Activated T-helper 1 cell treated with anti-CD3 and anti-CD28 coated beads, Interleukin-12 subunit alpha, Interleukin-12 subunit beta, Interleukin-2, Interleukin-4 antibody, amounts not matched to agents 30 ng/mL and 10 ng/mL and 1 ng/mL, durations not matched to agents 14 hours and 24 hours and 36 hours (primary cell): ENCODE measurements at regions of chr15 and their contacts with region 1.

Region 1: DNA sequence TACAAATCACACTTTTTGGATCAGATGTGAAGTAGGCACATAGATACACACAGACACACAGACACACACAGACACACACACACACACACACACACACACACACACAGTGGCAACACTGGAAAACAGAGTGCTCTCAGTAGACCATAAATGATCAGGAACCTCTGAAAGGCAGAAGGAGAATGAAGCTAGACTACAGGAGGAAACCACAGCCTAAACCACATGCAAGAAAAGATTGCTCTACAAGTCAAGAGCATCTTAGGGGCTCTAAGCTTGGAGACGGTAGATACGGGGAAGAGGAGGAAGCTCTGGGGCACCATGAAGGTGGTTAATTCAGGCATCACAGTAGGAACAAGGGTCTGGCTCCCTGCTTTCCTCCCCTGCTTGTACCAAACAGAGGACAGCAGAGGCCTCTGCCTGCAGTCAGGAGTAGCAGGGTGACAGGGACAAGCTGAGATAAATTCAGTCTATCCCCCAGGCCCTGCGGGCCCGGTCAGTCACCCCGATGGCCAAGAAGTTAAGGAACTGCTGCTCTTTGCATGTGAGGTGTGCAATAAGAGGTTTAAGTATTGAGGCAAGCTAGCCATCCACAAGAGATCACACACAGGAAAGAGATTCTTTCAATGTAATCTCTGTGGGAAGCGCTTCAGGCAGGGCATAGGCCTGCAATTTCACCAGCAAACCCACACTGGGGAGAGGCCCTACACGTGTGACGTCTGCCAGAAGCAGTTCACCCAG is 23.5 kb upstream of the ARPIN start:
- DNase-seq: peak; percentile 12
- H3K4me3 Mint-ChIP-seq: peak overlapping the region; percentile 1
- H3K27ac Mint-ChIP-seq: no peak overlapping the region
- H3K4me1 Mint-ChIP-seq: peaks cover 25% of the 10 kb centered on the region
- H3K27me3 Mint-ChIP-seq: peaks cover 36% of the 10 kb centered on the region

Region 2: GRCh38 chr15:89971592-89971997 is 35.4 kb after region 1 on chr15:
- intact Hi-C with region 1: loop called (anchors 5 kb)
- DNase-seq: peak; percentile 16
- H3K4me3 Mint-ChIP-seq: no peak overlapping the region
- H3K27ac Mint-ChIP-seq: no peak overlapping the region
- H3K4me1 Mint-ChIP-seq: no peaks in the 10 kb centered on the region
- H3K27me3 Mint-ChIP-seq: peaks cover 17% of the 10 kb centered on the region

Region 3: DNA sequence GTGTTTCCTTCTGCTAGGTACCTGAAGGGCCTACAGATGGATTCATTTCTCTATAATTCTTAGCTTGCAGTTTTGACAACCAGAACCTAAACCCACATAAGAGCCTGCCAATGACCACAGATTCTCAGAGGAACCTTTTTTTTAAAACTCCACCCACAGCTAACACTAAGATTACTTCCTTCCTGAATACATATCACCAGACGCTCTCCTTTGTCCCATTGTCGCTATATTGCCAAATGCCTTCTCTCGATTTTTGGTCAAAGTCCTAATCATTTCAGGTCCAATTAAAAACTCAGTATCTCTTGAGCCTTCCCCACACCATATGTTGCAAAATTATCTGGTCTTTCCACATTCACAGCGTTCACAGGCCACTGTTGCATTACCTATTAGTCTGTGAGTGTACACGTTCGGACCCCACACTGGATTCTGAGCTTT is 77.3 kb after region 1 on chr15:
- intact Hi-C with region 1: no loop called
- DNase-seq: peak; percentile 36
- H3K4me3 Mint-ChIP-seq: peak overlapping the region; percentile 27
- H3K27ac Mint-ChIP-seq: peak overlapping the region; percentile 61
- H3K4me1 Mint-ChIP-seq: peaks cover 50% of the 10 kb centered on the region
- H3K27me3 Mint-ChIP-seq: no peaks in the 10 kb centered on the region